ENCODE measurements at regions of chr7 and their contacts with region 1.

Region 1: DNA sequence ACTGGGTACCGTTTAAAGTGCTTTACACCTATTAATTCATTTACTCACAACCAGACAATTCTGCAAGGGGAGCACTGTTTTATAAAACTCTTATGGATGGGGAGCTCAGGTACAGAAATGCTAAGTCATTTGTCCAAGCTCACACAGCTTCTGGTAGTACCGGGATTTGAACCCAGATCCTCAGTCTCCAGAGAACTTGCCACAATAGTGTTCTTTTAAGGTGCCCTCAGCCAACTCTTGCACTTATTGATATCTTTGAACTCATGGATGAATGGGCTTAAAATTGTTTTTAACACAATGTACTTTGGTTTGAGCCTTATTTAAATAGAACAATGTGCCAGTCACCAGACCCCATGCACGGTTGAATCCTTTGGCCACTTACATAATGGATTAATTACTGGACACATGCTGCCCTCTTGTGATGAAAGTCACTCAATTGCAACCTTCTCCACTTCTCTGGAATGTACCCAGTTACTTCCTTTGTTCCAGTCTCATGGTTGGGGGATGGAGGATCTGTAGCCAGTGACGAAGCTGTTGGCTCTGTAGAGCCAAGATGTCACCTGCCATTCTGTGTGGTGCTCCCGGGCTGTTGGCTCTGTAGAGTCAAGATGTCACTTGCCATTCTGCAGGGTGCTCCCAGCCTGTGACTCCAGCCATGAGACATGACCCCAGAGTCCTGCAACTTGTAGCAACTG is 65.6 kb downstream of the NOD1 start:
- DNase-seq: peak in 1 of 2 experiments; percentile 48
- H3K4me3 ChIP-seq: no peak overlapping the region
- H3K27ac ChIP-seq: no peak overlapping the region
- H3K4me1 ChIP-seq: peaks cover 0 to 5% (median 3%) of the 10 kb centered on the region in 4 experiments; a peak in 3 of 7 replicates
- H3K27me3 ChIP-seq: no peaks in the 10 kb centered on the region
- CTCF ChIP-seq: peak in 2 of 3 experiments; percentile 57 to 82; a peak in 2 of 4 replicates
- EP300 ChIP-seq: peak in 1 of 2 experiments; percentile 56; a peak in 1 of 3 replicates
- POLR2A ChIP-seq: peak in 1 of 2 experiments; percentile 57; a peak in 1 of 3 replicates
- RAD21 ChIP-seq: peak; percentile 92

Region 2: DNA sequence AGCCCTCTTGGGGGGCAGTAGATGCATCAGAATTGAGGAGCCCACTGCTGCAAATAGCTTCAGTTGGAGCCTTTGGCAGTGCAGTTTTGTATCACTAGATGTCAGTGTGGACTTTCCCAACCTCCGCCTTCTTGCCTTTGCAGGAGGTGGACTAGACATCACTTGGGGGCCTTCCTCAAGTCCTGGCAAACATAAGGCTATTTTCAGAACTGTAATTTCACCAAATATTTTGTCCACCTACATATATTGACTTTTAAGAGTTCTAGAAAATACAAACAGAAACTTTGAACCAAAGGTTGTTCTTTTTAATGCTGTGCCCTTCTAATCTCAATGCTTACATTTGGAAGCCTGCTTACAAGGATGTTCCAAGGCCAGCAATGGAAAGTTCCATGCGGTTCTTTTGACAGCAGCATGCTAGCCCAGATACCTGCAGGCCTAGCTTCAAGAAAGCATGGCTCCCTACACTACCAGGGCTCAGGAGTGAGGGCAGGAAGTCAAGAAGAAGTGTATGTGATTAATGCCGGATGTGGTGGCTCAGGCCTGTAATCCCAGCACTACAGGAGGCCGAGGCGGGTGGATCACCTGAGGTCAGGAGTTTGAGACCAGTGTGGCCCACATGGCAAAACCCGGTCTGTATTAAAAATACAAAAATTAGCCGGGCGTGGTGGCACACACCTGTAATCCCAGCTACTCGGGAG is 136.6 kb before region 1 on chr7:
- CTCF ChIA-PET with region 1: interaction called, 50 read pairs
- POLR2A ChIA-PET with region 1: no interaction called
- DNase-seq: peak; percentile 15 to 63
- H3K4me3 ChIP-seq: no peak overlapping the region
- H3K27ac ChIP-seq: no peak overlapping the region
- H3K4me1 ChIP-seq: peaks cover 0 to 1% (median 0%) of the 10 kb centered on the region in 4 experiments; a peak in 1 of 7 replicates
- H3K27me3 ChIP-seq: no peaks in the 10 kb centered on the region
- CTCF ChIP-seq: peak; percentile 58 to 89 (median 87)
- EP300 ChIP-seq: no peak
- POLR2A ChIP-seq: no peak
- RAD21 ChIP-seq: peak; percentile 95 to 96